H1 (cell line): ENCODE measurements at regions of chr1 and their contacts with region 1.

Region 1: DNA sequence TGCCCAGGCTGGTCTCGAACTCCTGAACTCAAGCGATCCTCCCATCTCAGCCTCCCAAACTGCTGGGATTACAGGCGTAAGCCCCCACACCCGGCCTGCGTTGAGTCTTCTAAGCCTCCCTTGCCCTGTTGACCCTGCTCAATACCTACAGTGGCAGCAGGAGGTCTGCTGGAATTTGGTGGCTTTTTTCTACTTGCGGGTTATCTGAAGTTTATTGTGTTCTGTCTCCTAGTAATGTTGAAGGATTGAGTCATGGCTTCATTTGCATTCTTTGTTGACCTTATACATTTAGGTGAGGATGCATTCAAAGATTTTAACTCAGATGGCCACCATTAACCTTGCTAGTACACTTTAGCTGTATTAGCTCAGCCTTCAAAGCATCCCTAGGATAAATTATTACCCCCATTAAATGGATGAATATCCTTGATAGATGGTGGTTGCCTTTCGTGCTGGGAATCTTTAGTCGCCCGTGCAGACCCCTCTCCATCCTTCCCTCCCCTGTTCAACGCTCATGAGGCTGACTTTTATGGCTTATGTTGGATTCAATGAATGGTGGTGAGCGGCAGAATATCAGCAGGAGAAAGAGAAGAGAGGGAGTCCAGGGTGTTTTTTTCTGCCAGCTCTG is 9.7 kb upstream of the NPPB start:
- DNase-seq: no peak
- H3K4me3 ChIP-seq: no peak overlapping the region
- H3K27ac ChIP-seq: no peak overlapping the region
- H3K4me1 ChIP-seq: no peaks in the 10 kb centered on the region
- H3K27me3 ChIP-seq: no peaks in the 10 kb centered on the region; a peak in 2 of 7 replicates
- CTCF ChIP-seq: no peak
- EP300 ChIP-seq: no peak
- POLR2A ChIP-seq: no peak
- RAD21 ChIP-seq: no peak

Region 2: DNA sequence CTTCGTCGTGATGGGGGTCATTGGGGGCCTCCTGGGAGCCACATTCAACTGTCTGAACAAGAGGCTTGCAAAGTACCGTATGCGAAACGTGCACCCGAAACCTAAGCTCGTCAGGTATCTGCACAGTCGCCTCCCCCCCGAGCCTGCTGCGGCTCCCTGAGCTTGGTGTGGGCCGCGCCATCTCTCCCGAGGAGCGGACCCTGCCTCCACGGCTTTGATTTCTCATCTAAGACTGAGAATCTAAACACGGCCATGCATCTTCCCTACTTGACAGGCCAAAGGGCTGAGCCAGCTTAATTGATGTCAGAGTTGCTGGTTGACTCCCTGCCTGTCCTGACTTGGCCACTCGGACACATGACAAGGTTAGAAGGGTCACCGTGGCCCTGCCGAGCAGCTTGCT is 39.9 kb before region 1 on chr1:
- CTCF ChIA-PET with region 1: no interaction called
- POLR2A ChIA-PET with region 1: no interaction called
- DNase-seq: no peak
- H3K4me3 ChIP-seq: no peak overlapping the region
- H3K27ac ChIP-seq: no peak overlapping the region
- H3K4me1 ChIP-seq: no peaks in the 10 kb centered on the region
- H3K27me3 ChIP-seq: no peaks in the 10 kb centered on the region
- CTCF ChIP-seq: no peak
- EP300 ChIP-seq: no peak
- POLR2A ChIP-seq: no peak
- RAD21 ChIP-seq: no peak

Region 3: DNA sequence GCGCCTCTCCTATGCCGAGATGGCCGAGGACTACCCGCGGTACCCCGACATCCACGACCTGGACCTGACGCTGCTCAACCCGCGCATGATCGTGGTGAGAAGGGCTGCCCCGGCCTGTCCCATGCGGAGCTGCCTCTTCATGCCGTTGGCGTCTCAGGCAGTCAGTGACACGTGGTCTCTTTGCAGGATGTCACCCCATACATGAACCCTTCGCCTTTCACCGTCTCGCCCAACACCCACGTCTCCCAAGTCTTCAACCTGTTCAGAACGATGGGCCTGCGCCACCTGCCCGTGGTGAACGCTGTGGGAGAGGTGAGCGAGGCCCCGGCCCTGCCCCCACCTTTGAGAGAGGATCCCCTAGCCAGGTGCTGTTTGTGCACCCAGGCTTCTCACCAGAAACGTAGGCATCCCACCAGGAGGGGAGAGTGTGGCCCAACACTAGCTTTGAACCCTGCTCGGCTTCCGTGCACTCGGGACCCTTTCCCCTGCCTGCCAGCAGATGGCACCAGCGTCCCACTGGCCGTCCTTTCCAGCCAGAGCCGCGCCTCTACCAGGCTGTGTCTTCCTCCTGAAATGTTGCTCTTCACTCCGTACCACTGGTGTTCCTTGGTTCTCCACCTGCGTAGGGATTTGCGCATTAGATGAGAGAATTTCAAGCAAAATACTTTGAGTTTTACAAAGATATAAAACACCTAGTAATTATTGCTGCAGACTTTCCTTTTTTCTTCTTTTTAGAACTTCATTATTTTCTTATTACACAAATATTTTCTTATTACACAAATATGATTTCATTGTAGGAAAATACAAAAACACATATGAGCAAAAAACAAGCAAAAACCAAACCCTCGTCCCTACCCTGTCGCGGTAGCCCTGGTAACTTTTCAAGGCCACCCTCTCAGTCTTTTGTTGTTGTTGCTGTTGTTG is 29.8 kb before region 1 on chr1:
- CTCF ChIA-PET with region 1: interaction called, 27 read pairs
- POLR2A ChIA-PET with region 1: no interaction called
- DNase-seq: peak; percentile 33 to 91
- H3K4me3 ChIP-seq: no peak overlapping the region
- H3K27ac ChIP-seq: no peak overlapping the region
- H3K4me1 ChIP-seq: no peaks in the 10 kb centered on the region
- H3K27me3 ChIP-seq: no peaks in the 10 kb centered on the region
- CTCF ChIP-seq: peak; percentile 96 to 100 (median 99)
- EP300 ChIP-seq: no peak
- POLR2A ChIP-seq: no peak
- RAD21 ChIP-seq: peak; percentile 98

Region 4: GRCh38 chr1:11845641-11846335 is 22.7 kb before region 1 on chr1:
- CTCF ChIA-PET with region 1: interaction called, 27 read pairs
- POLR2A ChIA-PET with region 1: no interaction called
- DNase-seq: no peak
- H3K4me3 ChIP-seq: no peak overlapping the region
- H3K27ac ChIP-seq: no peak overlapping the region
- H3K4me1 ChIP-seq: no peaks in the 10 kb centered on the region
- H3K27me3 ChIP-seq: no peaks in the 10 kb centered on the region
- CTCF ChIP-seq: peak in 1 of 3 experiments; percentile 18; a peak in 1 of 4 replicates
- EP300 ChIP-seq: no peak
- POLR2A ChIP-seq: no peak
- RAD21 ChIP-seq: no peak

Region 5: DNA sequence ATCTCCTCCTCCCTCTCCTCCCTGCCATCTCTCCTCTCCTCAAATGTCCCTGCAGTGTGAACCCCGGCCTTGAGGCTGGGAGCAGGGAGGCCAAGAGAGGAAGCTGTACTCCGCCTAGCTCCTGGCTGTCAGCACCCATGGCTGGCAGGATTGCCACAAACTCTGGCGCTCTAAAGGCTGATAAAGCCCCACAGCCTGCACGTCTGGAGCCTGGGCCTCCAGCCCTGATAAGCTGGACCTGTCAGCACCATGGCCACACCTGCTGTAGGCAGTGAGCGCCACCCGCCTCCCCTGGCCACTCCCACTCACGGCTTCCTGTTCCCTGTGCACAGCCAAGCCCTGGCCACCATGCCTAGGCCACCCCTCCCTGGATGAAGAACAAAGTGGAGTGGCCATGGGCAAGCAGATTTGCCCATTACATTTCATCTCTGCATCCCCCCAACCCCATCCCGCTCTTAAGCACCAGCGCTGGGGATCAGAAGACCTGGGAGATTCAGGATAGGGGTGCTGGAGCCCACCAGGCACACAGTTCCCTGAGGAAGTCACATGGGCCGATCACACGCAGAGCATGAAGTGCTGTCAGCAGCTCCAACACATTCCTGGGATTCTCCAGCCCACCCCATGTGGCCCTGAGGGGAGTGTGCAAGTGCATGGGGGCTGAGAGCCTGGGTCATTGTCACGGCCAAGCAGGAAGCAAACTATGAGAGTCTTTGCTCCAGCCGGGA is 14.5 kb after region 1 on chr1:
- CTCF ChIA-PET with region 1: interaction called, 46 read pairs
- POLR2A ChIA-PET with region 1: interaction called, 5 read pairs
- DNase-seq: no peak
- H3K4me3 ChIP-seq: no peak overlapping the region
- H3K27ac ChIP-seq: no peak overlapping the region
- H3K4me1 ChIP-seq: peaks cover 0 to 10% (median 8%) of the 10 kb centered on the region in 4 experiments; a peak in 6 of 7 replicates
- H3K27me3 ChIP-seq: no peaks in the 10 kb centered on the region
- CTCF ChIP-seq: no peak
- EP300 ChIP-seq: no peak
- POLR2A ChIP-seq: no peak
- RAD21 ChIP-seq: no peak